Transverse colon (tissue), 4 donors: ENCODE measurements at regions of chr18 and their contacts with region 1.

Region 1: GRCh38 chr18:43703050-43703449 is 425.8 kb upstream of the SYT4 start:
- DNase-seq: no peak
- H3K4me3 ChIP-seq: no peak overlapping the region
- H3K27ac ChIP-seq: no peak overlapping the region
- H3K4me1 ChIP-seq: no peaks in the 10 kb centered on the region
- H3K27me3 ChIP-seq: no peaks in the 10 kb centered on the region
- CTCF ChIP-seq: no peak
- EP300 ChIP-seq: no peak
- POLR2A ChIP-seq: no peak

Region 2: GRCh38 chr18:43671431-43671830 is 31.6 kb before region 1 on chr18:
- in situ Hi-C with region 1: no loop called
- intact Hi-C with region 1: loop called (anchors 2 kb)
- DNase-seq: no peak
- H3K4me3 ChIP-seq: no peak overlapping the region
- H3K27ac ChIP-seq: no peak overlapping the region
- H3K4me1 ChIP-seq: no peaks in the 10 kb centered on the region
- H3K27me3 ChIP-seq: no peaks in the 10 kb centered on the region
- CTCF ChIP-seq: no peak
- EP300 ChIP-seq: no peak
- POLR2A ChIP-seq: no peak